ENCODE measurements at regions of chr9 and their contacts with region 1.

Region 1: GRCh38 chr9:136533775-136534157 is 12.1 kb downstream of the NOTCH1 start:
- DNase-seq: peak; percentile 86
- H3K27ac ChIP-seq: peak overlapping the region; percentile 83
- CTCF ChIP-seq: no peak

Region 2: GRCh38 chr9:136482793-136483588 is 50.8 kb before region 1 on chr9 and contains the start of gene SEC16A:
- CTCF ChIA-PET with region 1: interaction called, 12 read pairs
- POLR2A ChIA-PET with region 1: no interaction called
- DNase-seq: peak; percentile 99
- H3K27ac ChIP-seq: peak within 1 kb of the TSS; percentile 98
- CTCF ChIP-seq: no peak

Region 3: GRCh38 chr9:136625101-136626060 is 91.6 kb after region 1 on chr9:
- CTCF ChIA-PET with region 1: interaction called, 16 read pairs
- POLR2A ChIA-PET with region 1: interaction called, 3 read pairs
- DNase-seq: peak; percentile 88
- H3K27ac ChIP-seq: peak overlapping the region; percentile 100
- CTCF ChIP-seq: peak; percentile 88

Measured in RWPE1 (cell line).